ENCODE measurements at regions of chr22 and their contacts with region 1.

Region 1: DNA sequence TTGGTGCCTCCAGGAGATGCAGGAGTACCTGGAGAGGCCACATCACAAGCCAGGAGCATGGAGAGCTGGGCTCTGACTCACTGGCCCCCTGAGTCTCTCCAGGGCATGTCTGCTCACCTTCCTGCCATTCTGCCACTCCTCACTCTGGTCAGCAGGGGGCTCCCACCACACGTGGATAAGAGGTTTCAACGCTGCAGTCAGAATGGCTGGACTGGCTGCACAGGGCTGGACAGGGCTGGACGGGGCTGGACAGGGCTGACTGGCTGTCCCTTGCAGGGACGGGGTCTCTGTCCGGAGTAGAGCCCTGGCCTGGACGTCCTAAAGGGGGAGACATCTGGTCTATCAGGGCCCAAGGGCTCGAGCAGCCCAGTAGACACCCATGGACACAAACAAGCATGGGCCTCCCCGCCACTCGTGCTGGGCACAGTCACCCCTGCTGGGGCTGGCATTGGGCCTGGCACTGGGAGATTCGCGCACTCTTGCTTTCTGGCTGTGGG is 34.6 kb downstream of the CYTH4 start:
- DNase-seq: peak; percentile 63
- H3K4me3 Mint-ChIP-seq: no peak overlapping the region
- H3K27ac Mint-ChIP-seq: no peak overlapping the region
- H3K4me1 Mint-ChIP-seq: peaks cover 30% of the 10 kb centered on the region
- H3K27me3 Mint-ChIP-seq: peaks cover 12% of the 10 kb centered on the region

Region 2: DNA sequence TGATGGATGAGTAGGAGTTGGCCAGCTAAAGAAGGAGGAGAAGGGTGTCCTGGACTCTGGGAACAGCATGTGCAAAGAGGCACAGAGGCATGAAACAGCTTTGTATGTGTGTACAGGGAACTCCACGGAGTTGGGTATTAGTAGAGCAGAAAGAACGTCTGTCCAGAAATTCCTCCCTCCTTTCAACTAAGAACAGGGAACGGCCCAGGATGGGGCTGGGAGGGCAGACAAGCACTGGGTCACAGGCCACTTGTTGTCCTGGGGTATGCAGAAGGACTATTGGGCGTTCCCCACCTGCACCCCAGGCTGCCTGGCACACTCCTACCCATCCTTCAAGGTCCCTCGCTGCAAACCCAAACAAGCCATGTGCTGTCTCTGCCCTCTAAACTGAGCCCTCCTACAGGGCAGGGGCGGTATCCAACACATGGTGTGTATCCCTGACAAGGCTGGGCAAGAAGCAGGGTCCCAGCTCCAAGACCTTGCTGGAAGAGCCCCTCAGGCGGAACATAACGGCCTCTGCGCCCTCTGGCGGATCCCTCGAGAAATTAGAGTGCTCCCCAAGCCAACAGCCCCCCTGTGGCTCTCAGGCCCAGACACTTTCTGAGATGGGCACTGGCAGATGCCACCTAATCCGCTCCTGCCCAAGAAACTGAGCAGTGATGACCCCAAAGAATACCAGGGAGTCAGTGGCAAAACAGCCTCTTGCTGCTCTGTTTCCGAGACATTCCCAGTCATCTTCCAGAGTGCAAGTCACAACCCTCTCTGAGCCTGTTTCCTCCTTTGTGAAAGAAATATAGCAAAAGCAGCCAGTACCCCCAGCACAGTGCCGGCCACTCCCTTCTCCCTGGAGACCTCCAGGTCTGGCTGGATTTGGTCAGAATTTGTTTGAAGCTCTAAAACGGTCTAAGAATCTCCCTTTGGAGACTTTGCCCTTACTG is 112.0 kb after region 1 on chr22:
- intact Hi-C with region 1: loop called (anchors 2 kb)
- DNase-seq: peak; percentile 26
- H3K4me3 Mint-ChIP-seq: no peak overlapping the region
- H3K27ac Mint-ChIP-seq: no peak overlapping the region
- H3K4me1 Mint-ChIP-seq: peaks cover 14% of the 10 kb centered on the region
- H3K27me3 Mint-ChIP-seq: peaks cover 57% of the 10 kb centered on the region

Region 3: DNA sequence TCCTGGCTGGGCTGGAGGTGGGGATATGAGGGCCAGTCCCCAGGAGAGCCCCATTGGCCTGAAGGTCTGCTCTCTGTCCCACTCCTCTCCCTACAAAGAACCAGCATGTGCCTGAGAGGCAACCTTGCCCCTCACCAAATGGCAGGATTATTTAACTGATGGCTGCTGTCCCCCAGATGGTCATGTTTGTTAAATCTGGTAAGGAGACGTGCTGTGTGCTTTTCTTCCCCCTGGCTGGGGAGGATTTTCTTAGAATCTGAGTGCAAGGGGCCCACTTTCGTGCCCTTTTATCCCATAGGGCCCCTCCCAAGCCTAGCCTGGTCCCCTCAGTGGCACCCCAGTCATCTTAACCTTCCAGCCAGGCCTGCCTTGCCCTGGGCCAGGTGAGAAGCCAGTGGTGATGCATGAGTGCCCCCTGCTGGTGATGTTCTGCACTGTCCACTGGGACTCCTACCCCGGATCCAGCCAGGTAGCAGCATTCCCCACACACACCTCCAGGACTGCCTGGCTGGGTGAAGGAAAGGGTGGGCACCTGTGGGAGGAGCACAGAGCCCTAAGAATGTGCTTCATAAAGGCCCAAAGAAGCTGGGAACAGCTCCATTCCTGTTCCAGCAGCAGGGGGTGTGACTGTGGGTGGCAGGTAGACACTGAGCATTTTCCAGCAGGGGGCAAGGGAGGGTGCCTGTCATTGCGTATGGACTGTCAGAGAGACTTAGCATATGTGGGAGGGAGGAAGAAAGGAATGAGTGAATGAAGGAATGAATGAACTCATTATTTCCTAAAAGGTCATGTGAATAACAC is 140.4 kb after region 1 on chr22:
- intact Hi-C with region 1: loop called (anchors 1 kb)
- DNase-seq: peak; percentile 69
- H3K4me3 Mint-ChIP-seq: no peak overlapping the region
- H3K27ac Mint-ChIP-seq: no peak overlapping the region
- H3K4me1 Mint-ChIP-seq: peaks cover 7% of the 10 kb centered on the region
- H3K27me3 Mint-ChIP-seq: no peaks in the 10 kb centered on the region